Vagina (tissue), 2 donors: ENCODE measurements at regions of chr12 and their contacts with region 1.

Region 1: DNA sequence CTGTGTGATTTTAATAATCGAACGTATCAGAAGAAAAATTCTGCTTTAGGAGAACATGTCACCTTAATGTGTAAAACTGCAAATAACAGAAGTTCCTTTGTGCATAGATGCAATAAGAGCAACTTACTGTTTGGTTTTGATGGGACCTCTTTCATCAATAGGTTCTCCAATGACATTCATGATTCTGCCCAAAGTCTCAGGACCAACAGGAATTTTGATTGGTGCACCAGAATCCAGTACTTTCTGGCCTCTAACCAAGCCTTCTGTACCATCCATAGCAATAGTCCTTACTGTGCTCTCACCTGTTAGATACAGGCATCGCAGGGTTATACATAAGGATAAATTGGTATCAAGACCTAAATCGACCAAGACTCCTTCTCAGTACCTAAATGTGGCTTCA is 1.1 kb downstream of the ATP5F1B start:
- DNase-seq: no peak
- H3K4me3 ChIP-seq: peak overlapping the region; percentile 83 to 98
- H3K27ac ChIP-seq: peak overlapping the region; percentile 95
- H3K4me1 ChIP-seq: peaks cover 26% of the 10 kb centered on the region
- H3K27me3 ChIP-seq: no peaks in the 10 kb centered on the region
- CTCF ChIP-seq: no peak
- POLR2A ChIP-seq: no peak

Region 2: DNA sequence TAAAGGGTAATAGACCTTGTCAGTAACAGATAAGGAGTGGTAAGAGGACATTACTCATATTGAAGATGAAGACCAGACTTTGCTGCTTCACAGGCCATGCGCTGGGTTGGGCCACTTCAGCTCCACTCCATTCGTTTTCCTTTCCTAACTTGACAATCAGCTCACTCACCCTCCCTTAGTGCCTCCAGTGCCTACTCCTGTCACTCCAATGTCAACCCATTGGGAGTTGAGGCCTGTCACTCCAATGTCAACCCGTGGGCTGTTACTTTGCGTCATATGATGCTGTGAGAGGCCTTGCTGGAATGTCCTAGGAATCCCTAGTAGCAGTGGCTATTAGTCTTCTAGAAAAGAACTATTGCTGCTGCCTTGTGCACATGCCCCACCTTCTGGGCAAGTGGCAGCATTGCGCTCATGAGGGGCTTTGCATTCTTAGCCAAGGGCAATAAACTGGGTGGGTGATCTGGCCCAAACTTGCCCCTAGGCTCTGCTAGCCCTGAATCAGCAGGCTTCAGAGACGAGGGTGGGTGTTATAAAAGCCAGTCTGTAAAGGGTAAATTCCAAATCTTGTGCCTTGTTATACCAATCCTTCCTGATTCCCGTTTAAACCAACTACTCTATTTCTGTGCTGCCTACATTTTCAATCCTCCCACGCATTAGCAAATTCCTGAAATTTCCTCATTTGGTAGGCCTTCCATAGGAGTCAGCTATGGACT is 50.6 kb before region 1 on chr12:
- intact Hi-C with region 1: no loop called
- DNase-seq: no peak
- H3K4me3 ChIP-seq: no peak overlapping the region
- H3K27ac ChIP-seq: peak overlapping the region; percentile 63
- H3K4me1 ChIP-seq: peaks cover 10% of the 10 kb centered on the region
- H3K27me3 ChIP-seq: no peaks in the 10 kb centered on the region
- CTCF ChIP-seq: peak in 2 of 3 experiments; percentile 23 to 39
- POLR2A ChIP-seq: no peak

Region 3: GRCh38 chr12:56688129-56688845 is 43.6 kb after region 1 on chr12 and contains the start of gene PTGES3:
- intact Hi-C with region 1: loop called (anchors 5 kb)
- DNase-seq: peak; percentile 97 to 99
- H3K4me3 ChIP-seq: peak within 1 kb of the TSS; percentile 83 to 94
- H3K27ac ChIP-seq: peak within 1 kb of the TSS; percentile 100
- H3K4me1 ChIP-seq: peaks cover 42% of the 10 kb centered on the region
- H3K27me3 ChIP-seq: no peaks in the 10 kb centered on the region
- CTCF ChIP-seq: peak in 1 of 3 experiments; percentile 46
- POLR2A ChIP-seq: peak; percentile 74 to 96
- total RNA-seq, gene PTGES3: 81.0 TPM